Activated CD4-positive, alpha-beta memory T cell treated with anti-CD3 and anti-CD28 coated beads for 36 hours (primary cell): ENCODE measurements at regions of chr3 and their contacts with region 1.

Region 1: GRCh38 chr3:69161587-69162307 is 39.4 kb upstream of the LMOD3 start:
- DNase-seq: peak; percentile 35
- H3K4me3 Mint-ChIP-seq: no peak overlapping the region
- H3K27ac Mint-ChIP-seq: no peak overlapping the region
- H3K4me1 Mint-ChIP-seq: peaks cover 14% of the 10 kb centered on the region
- H3K27me3 Mint-ChIP-seq: peaks cover 6% of the 10 kb centered on the region

Region 2: GRCh38 chr3:69129531-69129930 is 32.2 kb before region 1 on chr3:
- CTCF ChIA-PET with region 1: interaction called, 12 read pairs
- POLR2A ChIA-PET with region 1: no interaction called
- intact Hi-C with region 1: no loop called
- DNase-seq: no peak
- H3K4me3 Mint-ChIP-seq: no peak overlapping the region
- H3K27ac Mint-ChIP-seq: no peak overlapping the region
- H3K4me1 Mint-ChIP-seq: no peaks in the 10 kb centered on the region
- H3K27me3 Mint-ChIP-seq: peaks cover 1% of the 10 kb centered on the region

Region 3: GRCh38 chr3:69194431-69195165 is 32.9 kb after region 1 on chr3:
- CTCF ChIA-PET with region 1: interaction called, 26 read pairs
- POLR2A ChIA-PET with region 1: no interaction called
- intact Hi-C with region 1: loop called (anchors 1 kb)
- DNase-seq: no peak
- H3K4me3 Mint-ChIP-seq: no peak overlapping the region
- H3K27ac Mint-ChIP-seq: no peak overlapping the region
- H3K4me1 Mint-ChIP-seq: peaks cover 57% of the 10 kb centered on the region
- H3K27me3 Mint-ChIP-seq: no peaks in the 10 kb centered on the region

Region 4: DNA sequence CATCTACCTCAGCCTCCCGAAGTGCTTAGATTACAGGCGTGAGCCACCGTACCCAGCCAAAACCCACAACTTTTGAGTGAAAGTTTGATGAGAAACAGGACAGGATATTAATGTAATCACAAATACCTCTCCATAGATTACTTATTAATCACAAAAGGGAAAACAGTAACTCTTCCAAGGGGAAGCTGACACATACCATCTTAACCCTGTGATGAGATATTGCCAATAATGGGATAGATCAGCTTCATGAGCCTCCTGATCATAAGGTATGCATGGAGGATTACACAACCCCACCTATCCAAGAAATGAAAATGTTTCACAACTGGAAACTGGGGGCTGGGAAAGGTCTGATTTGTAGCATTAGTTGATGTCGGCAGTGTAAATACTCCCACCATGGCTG is 92.6 kb after region 1 on chr3:
- CTCF ChIA-PET with region 1: no interaction called
- POLR2A ChIA-PET with region 1: no interaction called
- intact Hi-C with region 1: no loop called
- DNase-seq: no peak
- H3K4me3 Mint-ChIP-seq: no peak overlapping the region
- H3K27ac Mint-ChIP-seq: no peak overlapping the region
- H3K4me1 Mint-ChIP-seq: peaks cover 7% of the 10 kb centered on the region
- H3K27me3 Mint-ChIP-seq: no peaks in the 10 kb centered on the region

Region 5: GRCh38 chr3:69271098-69271497 is 109.4 kb after region 1 on chr3:
- CTCF ChIA-PET with region 1: no interaction called
- POLR2A ChIA-PET with region 1: no interaction called
- intact Hi-C with region 1: no loop called
- DNase-seq: no peak
- H3K4me3 Mint-ChIP-seq: no peak overlapping the region
- H3K27ac Mint-ChIP-seq: no peak overlapping the region
- H3K4me1 Mint-ChIP-seq: peaks cover 2% of the 10 kb centered on the region
- H3K27me3 Mint-ChIP-seq: peaks cover 2% of the 10 kb centered on the region

Region 6: GRCh38 chr3:69282181-69282580 is 120.4 kb after region 1 on chr3:
- CTCF ChIA-PET with region 1: interaction called, 10 read pairs
- POLR2A ChIA-PET with region 1: no interaction called
- intact Hi-C with region 1: loop called (anchors 2 kb)
- DNase-seq: peak; percentile 84
- H3K4me3 Mint-ChIP-seq: no peak overlapping the region
- H3K27ac Mint-ChIP-seq: peak overlapping the region; percentile 38
- H3K4me1 Mint-ChIP-seq: peaks cover 19% of the 10 kb centered on the region
- H3K27me3 Mint-ChIP-seq: no peaks in the 10 kb centered on the region

Region 7: DNA sequence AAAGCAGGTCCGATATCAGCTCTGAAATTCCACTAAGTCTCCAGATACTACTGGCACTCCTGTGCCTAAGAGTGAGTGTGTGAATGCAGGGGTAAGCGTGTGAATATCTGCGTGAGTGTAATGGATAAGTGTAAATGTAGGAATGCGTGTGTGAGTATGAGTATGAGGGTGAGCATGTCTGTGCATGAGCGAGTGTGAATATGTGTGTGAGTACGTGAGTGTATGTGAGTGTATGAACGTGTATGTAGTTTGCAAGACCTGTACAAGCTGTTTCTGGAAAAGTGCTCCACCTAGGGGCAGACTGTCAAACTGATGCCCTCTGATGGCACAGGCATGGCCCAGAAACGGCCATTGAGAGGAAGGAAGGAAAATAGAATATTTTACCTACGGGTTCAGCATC is 248.5 kb after region 1 on chr3:
- CTCF ChIA-PET with region 1: interaction called, 66 read pairs
- POLR2A ChIA-PET with region 1: no interaction called
- intact Hi-C with region 1: loop called (anchors 1 kb)
- DNase-seq: peak; percentile 81
- H3K4me3 Mint-ChIP-seq: no peak overlapping the region
- H3K27ac Mint-ChIP-seq: no peak overlapping the region
- H3K4me1 Mint-ChIP-seq: peaks cover 4% of the 10 kb centered on the region
- H3K27me3 Mint-ChIP-seq: peaks cover 3% of the 10 kb centered on the region

Region 8: DNA sequence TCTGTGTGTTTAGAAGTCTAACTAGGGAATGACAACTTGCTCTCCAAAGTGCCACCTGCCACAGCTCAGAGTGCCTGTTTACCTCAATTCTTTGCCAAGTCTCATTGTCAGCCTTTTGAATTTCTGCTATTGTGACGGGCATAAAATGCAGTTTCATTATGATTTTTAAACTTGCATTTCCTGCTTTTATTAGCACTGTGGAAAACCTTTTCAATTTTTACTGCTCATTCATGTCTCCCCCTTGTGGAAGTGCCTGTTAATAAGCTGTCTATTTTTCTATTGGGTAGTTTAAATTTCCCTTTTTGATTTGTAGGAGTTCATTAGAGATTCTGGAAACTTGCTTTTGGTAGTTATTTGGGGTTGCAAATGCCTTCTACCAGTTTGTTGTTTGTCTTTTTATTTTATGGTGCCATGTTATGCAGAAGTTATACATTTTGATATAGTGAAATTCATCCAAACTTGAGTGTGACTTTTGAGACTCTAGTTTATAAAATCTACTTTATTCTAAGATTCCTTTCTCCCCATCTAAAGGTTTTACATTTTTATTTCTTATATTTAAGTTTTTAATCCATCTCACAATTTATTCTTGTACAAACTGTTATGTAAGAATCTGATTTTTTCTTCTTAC is 278.0 kb after region 1 on chr3:
- CTCF ChIA-PET with region 1: interaction called, 21 read pairs
- POLR2A ChIA-PET with region 1: no interaction called
- intact Hi-C with region 1: loop called (anchors 2 kb)
- DNase-seq: peak; percentile 15
- H3K4me3 Mint-ChIP-seq: no peak overlapping the region
- H3K27ac Mint-ChIP-seq: no peak overlapping the region
- H3K4me1 Mint-ChIP-seq: peaks cover 47% of the 10 kb centered on the region
- H3K27me3 Mint-ChIP-seq: no peaks in the 10 kb centered on the region